Left ventricle myocardium inferior (tissue), 1 donor: ENCODE measurements at regions of chr13 and their contacts with region 1.

Region 1: GRCh38 chr13:79541426-79542049 is 60.6 kb downstream of the NDFIP2 start:
- DNase-seq: no peak
- H3K4me3 ChIP-seq: no peak overlapping the region
- H3K27ac ChIP-seq: no peak overlapping the region
- H3K4me1 ChIP-seq: peaks cover 6% of the 10 kb centered on the region
- H3K27me3 ChIP-seq: no peaks in the 10 kb centered on the region
- CTCF ChIP-seq: peak; percentile 89

Region 2: GRCh38 chr13:79295906-79296706 is 245.4 kb before region 1 on chr13:
- intact Hi-C with region 1: no loop called
- DNase-seq: no peak
- H3K4me3 ChIP-seq: no peak overlapping the region
- H3K27ac ChIP-seq: no peak overlapping the region
- H3K4me1 ChIP-seq: no peaks in the 10 kb centered on the region
- H3K27me3 ChIP-seq: peaks cover 29% of the 10 kb centered on the region
- CTCF ChIP-seq: no peak

Region 3: GRCh38 chr13:79423801-79424642 is 117.5 kb before region 1 on chr13:
- intact Hi-C with region 1: loop called (anchors 5 kb)
- DNase-seq: no peak
- H3K4me3 ChIP-seq: no peak overlapping the region
- H3K27ac ChIP-seq: no peak overlapping the region
- H3K4me1 ChIP-seq: peaks cover 5% of the 10 kb centered on the region
- H3K27me3 ChIP-seq: no peaks in the 10 kb centered on the region
- CTCF ChIP-seq: peak; percentile 79

Region 4: DNA sequence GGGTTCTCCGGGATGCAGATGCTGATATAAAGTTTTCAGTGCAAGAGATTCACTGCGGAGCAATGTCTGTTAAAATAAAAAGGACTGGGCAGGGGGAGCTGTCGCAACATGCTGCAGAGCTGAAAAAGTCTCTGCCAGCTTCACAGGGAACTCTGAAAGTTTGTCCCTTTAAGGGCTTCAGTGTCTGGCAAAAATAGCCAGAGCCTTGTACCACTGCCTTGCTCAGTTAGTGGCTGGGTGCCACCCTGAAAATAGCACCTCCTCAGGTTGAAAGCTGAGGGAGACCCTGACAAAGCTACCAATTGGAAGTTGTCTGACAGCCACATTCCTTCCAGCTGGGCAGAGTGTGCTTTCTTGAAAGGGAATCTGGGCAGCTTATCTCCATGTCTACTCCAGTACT is 63.6 kb before region 1 on chr13:
- intact Hi-C with region 1: loop called (anchors 5 kb)
- DNase-seq: peak; percentile 53
- H3K4me3 ChIP-seq: no peak overlapping the region
- H3K27ac ChIP-seq: peak overlapping the region; percentile 61
- H3K4me1 ChIP-seq: peaks cover 34% of the 10 kb centered on the region
- H3K27me3 ChIP-seq: no peaks in the 10 kb centered on the region
- CTCF ChIP-seq: peak; percentile 32